BJ (cell line): ENCODE measurements at regions of chr4 and their contacts with region 1.

Region 1: DNA sequence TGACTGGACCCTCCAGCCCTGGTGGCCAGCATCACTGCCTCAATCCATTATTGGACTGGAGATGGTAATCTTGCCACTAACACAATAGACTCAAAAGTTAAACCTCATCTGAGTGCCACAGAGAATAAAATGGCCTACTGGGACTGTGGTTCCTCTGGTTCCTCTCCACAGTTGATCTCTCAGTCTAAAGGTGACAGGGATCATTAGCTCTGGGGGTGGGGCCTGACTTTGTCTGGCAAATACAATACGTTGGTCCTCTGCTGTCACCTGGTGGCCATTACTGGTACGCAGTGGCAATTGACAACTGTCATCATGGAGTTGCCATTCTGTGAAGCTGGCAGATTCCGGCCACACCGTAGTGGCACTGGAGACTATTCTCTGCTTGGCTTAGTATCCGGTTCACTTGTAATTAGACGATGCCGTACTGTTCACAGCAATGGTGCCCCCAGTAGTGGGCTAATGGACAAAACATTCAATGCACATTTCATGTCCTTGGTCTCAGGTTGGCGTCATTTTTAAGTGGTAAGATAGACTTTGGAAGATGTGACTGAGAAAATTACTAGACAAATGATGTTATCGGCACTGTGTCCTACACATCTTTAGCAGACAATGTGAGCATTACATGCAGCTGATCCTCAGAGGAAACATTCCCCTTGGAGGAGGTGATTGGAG is 6.7 kb downstream of the FGFBP2 start:
- DNase-seq: no peak
- H3K4me3 ChIP-seq: no peak overlapping the region
- H3K27me3 ChIP-seq: peaks cover 3% of the 10 kb centered on the region
- CTCF ChIP-seq: peak; percentile 98

Region 2: DNA sequence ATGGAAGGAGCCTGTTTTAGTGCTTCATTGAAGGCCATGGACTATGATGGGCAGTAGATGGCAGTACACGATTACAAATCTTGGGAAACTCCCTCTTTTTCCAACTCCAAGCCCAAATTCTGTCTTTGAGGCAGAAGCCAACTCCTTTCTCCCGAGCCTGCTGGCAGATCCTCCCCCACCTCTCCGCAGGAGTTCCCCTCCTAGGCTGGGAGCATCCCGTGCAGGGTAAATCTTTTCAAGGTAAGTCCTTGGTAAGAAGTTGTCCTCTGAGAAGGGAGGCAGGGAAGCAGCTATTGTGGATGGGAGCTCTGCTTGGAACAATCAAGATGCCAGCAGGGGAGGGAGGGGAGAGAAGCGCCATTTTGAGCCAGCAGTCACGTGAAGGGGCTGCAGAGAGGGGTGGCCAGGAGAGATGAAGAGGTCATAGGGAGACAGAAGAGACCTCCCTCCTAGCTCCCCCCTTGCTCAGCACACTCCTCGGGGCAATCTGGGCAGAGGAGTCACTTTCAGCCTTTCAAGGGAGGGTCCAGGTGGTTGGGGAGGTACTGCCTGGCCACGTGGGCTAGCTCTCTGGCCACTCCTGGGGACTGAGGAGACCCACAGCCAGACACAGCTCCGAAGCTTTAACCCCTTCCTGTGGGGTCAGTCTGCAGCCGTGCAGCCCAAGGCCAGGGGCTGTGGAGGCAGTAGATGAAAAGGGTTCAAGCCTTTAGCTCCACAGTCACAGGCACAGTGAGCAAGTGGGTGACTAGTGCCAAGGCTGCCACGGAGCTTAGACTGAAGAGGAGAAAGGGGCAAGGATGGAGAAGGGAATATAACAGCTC is 477.0 kb before region 1 on chr4:
- CTCF ChIA-PET with region 1: interaction called, 49 read pairs
- POLR2A ChIA-PET with region 1: no interaction called
- DNase-seq: peak; percentile 56
- H3K4me3 ChIP-seq: peak overlapping the region; percentile 49
- H3K27me3 ChIP-seq: no peaks in the 10 kb centered on the region
- CTCF ChIP-seq: peak; percentile 77

Region 3: GRCh38 chr4:15875663-15876460 is 80.5 kb before region 1 on chr4:
- CTCF ChIA-PET with region 1: interaction called, 192 read pairs
- POLR2A ChIA-PET with region 1: no interaction called
- DNase-seq: no peak
- H3K4me3 ChIP-seq: no peak overlapping the region
- H3K27me3 ChIP-seq: peaks cover 6% of the 10 kb centered on the region; the same call in 1 of the 2 replicates
- CTCF ChIP-seq: no peak

Region 4: GRCh38 chr4:15893962-15894361 is 62.4 kb before region 1 on chr4:
- CTCF ChIA-PET with region 1: interaction called, 41 read pairs
- POLR2A ChIA-PET with region 1: no interaction called
- DNase-seq: peak; percentile 93
- H3K4me3 ChIP-seq: no peak overlapping the region
- H3K27me3 ChIP-seq: peaks cover 13% of the 10 kb centered on the region
- CTCF ChIP-seq: no peak

Region 5: GRCh38 chr4:15938182-15938581 is 18.1 kb before region 1 on chr4:
- CTCF ChIA-PET with region 1: interaction called, 11 read pairs
- POLR2A ChIA-PET with region 1: no interaction called
- DNase-seq: no peak
- H3K4me3 ChIP-seq: no peak overlapping the region
- H3K27me3 ChIP-seq: peaks cover 12% of the 10 kb centered on the region
- CTCF ChIP-seq: no peak

Region 6: DNA sequence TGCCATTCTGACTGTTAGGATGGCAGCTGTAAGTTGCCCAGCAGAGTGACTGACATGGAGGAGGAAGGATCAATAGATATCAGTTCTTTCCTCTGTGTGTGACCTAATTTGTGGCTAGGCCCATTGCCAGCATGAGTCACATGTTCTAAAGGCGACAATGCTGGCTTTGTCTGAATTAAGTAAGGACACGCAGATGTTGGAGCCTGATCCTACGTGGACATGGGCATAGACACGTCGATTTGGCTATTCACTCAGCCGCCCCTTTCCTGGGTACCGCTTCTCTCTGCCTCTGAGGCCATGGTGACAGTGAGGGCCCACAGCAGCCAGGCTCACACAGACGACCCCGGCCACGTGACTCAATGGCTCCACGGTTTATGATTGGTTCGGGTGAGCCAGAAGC is 111.2 kb after region 1 on chr4:
- CTCF ChIA-PET with region 1: no interaction called
- POLR2A ChIA-PET with region 1: no interaction called
- DNase-seq: no peak
- H3K4me3 ChIP-seq: no peak overlapping the region
- H3K27me3 ChIP-seq: no peaks in the 10 kb centered on the region
- CTCF ChIP-seq: no peak